Activated CD4-positive, alpha-beta T cell treated with anti-CD3 and anti-CD28 coated beads, Interleukin-2, amount 10 ng/mL, durations not matched to agents 7 days and 5 days (primary cell): ENCODE measurements at regions of chr5 and their contacts with region 1.

Region 1: GRCh38 chr5:138789771-138790242 is 36.6 kb downstream of the CTNNA1 start:
- DNase-seq: peak; percentile 46
- H3K4me3 Mint-ChIP-seq: no peak overlapping the region
- H3K27ac Mint-ChIP-seq: no peak overlapping the region
- H3K4me1 Mint-ChIP-seq: peaks cover 6% of the 10 kb centered on the region
- H3K27me3 Mint-ChIP-seq: peaks cover 41% of the 10 kb centered on the region

Region 2: GRCh38 chr5:138772986-138773594 is 16.7 kb before region 1 on chr5:
- CTCF ChIA-PET with region 1: interaction called, 16 read pairs
- POLR2A ChIA-PET with region 1: no interaction called
- DNase-seq: no peak
- H3K4me3 Mint-ChIP-seq: no peak overlapping the region
- H3K27ac Mint-ChIP-seq: no peak overlapping the region
- H3K4me1 Mint-ChIP-seq: no peaks in the 10 kb centered on the region
- H3K27me3 Mint-ChIP-seq: peaks cover 9% of the 10 kb centered on the region

Region 3: GRCh38 chr5:138805096-138805495 is 15.3 kb after region 1 on chr5:
- CTCF ChIA-PET with region 1: interaction called, 10 read pairs
- POLR2A ChIA-PET with region 1: no interaction called
- DNase-seq: no peak
- H3K4me3 Mint-ChIP-seq: no peak overlapping the region
- H3K27ac Mint-ChIP-seq: no peak overlapping the region
- H3K4me1 Mint-ChIP-seq: peaks cover 6% of the 10 kb centered on the region
- H3K27me3 Mint-ChIP-seq: peaks cover 11% of the 10 kb centered on the region

Region 4: GRCh38 chr5:138844812-138845513 is 55.2 kb after region 1 on chr5:
- CTCF ChIA-PET with region 1: no interaction called
- POLR2A ChIA-PET with region 1: no interaction called
- DNase-seq: no peak
- H3K4me3 Mint-ChIP-seq: no peak overlapping the region
- H3K27ac Mint-ChIP-seq: no peak overlapping the region
- H3K4me1 Mint-ChIP-seq: peaks cover 10% of the 10 kb centered on the region
- H3K27me3 Mint-ChIP-seq: peaks cover 1% of the 10 kb centered on the region